ENCODE measurements at regions of chr1 and their contacts with region 1.

Region 1: GRCh38 chr1:165597883-165598675 is 33.0 kb upstream of the MGST3 start:
- DNase-seq: peak; percentile 90
- ATAC-seq: peak; percentile 99
- H3K4me3 ChIP-seq: peak overlapping the region; percentile 55 to 77 (median 70)
- H3K27ac ChIP-seq: peak overlapping the region; percentile 26
- H3K4me1 ChIP-seq: peaks cover 38% of the 10 kb centered on the region
- H3K27me3 ChIP-seq: no peaks in the 10 kb centered on the region
- CTCF ChIP-seq: no peak
- EP300 ChIP-seq: no peak
- POLR2A ChIP-seq: 0 out of 4 replicates have a peak, but pooled peaks of 1 of the 2 experiments have one; percentile 1
- RAD21 ChIP-seq: no peak

Region 2: GRCh38 chr1:165144757-165145397 is 453.2 kb before region 1 on chr1:
- CTCF ChIA-PET with region 1: no interaction called
- POLR2A ChIA-PET with region 1: no interaction called
- in situ Hi-C with region 1: loop called (anchors 25 kb)
- intact Hi-C with region 1: no loop called
- DNase-seq: peak; percentile 44
- ATAC-seq: peak; percentile 95
- H3K4me3 ChIP-seq: no peak overlapping the region
- H3K27ac ChIP-seq: no peak overlapping the region
- H3K4me1 ChIP-seq: peaks cover 9% of the 10 kb centered on the region
- H3K27me3 ChIP-seq: no peaks in the 10 kb centered on the region
- CTCF ChIP-seq: peak; percentile 85
- EP300 ChIP-seq: no peak
- POLR2A ChIP-seq: no peak
- RAD21 ChIP-seq: 0 out of 2 replicates have a peak, but pooled peaks have one; percentile 21

Region 3: GRCh38 chr1:165392634-165393571 is 205.2 kb before region 1 on chr1:
- CTCF ChIA-PET with region 1: interaction called, 34 read pairs
- POLR2A ChIA-PET with region 1: no interaction called
- in situ Hi-C with region 1: no loop called
- intact Hi-C with region 1: loop called (anchors 1 kb)
- DNase-seq: peak; percentile 35
- ATAC-seq: peak; percentile 94
- H3K4me3 ChIP-seq: no peak overlapping the region
- H3K27ac ChIP-seq: no peak overlapping the region
- H3K4me1 ChIP-seq: no peaks in the 10 kb centered on the region
- H3K27me3 ChIP-seq: no peaks in the 10 kb centered on the region
- CTCF ChIP-seq: peak; percentile 91
- EP300 ChIP-seq: no peak
- POLR2A ChIP-seq: no peak
- RAD21 ChIP-seq: peak; percentile 75

Region 4: GRCh38 chr1:165630629-165631341 is 32.7 kb after region 1 on chr1 and contains the start of gene MGST3:
- CTCF ChIA-PET with region 1: no interaction called
- POLR2A ChIA-PET with region 1: interaction called, 7 read pairs
- in situ Hi-C with region 1: no loop called
- intact Hi-C with region 1: loop called (anchors 2 kb)
- DNase-seq: peak; percentile 91
- ATAC-seq: peak; percentile 94
- H3K4me3 ChIP-seq: peak within 1 kb of the TSS; percentile 69 to 85 (median 82)
- H3K27ac ChIP-seq: peak within 1 kb of the TSS; percentile 87
- H3K4me1 ChIP-seq: peaks cover 36% of the 10 kb centered on the region
- H3K27me3 ChIP-seq: peaks cover 0 to 4% of the 10 kb centered on the region in 2 experiments; a peak in 1 of 5 replicates
- CTCF ChIP-seq: no peak
- EP300 ChIP-seq: no peak
- POLR2A ChIP-seq: peak; percentile 74 to 91
- RAD21 ChIP-seq: no peak
- total RNA-seq, gene MGST3: 34.3 and 59.7 TPM in 2 replicates

Region 5: DNA sequence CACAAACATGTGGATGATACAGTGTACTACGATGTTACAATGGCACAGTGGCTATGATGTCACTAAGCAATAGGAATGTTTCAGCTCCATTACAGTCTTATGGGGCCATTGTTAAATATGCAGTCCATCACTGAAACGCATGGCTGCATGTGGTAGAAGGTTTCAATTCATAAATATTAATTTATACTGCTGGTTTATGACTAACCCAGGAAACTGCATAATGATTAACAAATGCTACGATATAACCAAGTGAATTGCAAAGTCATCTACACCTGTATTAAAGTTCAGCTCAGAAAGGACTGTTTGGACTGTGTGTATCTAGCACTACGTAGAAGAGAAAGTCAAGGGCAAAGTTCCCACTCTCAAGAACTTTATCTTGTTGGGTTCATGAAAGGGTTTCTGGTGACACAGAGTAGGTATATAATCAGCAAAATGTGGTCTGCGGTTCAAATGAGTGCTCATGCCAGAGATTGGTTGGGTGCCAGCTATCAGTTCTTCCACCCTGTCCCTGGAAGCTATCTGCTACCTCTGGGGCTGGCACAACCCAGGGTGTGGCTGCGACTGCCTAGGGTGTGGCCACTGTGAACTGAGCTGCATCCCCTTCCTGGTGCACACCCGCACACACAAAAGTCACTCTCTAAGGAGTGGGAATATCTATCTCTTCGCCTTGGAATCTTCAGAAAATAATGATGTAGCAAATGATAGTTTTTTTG is 47.7 kb after region 1 on chr1:
- CTCF ChIA-PET with region 1: no interaction called
- POLR2A ChIA-PET with region 1: no interaction called
- in situ Hi-C with region 1: no loop called
- intact Hi-C with region 1: no loop called
- DNase-seq: peak; percentile 57
- ATAC-seq: peak; percentile 74
- H3K4me3 ChIP-seq: no peak overlapping the region
- H3K27ac ChIP-seq: peak overlapping the region; percentile 55
- H3K4me1 ChIP-seq: peaks cover 27% of the 10 kb centered on the region
- H3K27me3 ChIP-seq: no peaks in the 10 kb centered on the region
- CTCF ChIP-seq: no peak
- EP300 ChIP-seq: no peak
- POLR2A ChIP-seq: no peak
- RAD21 ChIP-seq: no peak

Region 6: GRCh38 chr1:165717918-165718515 is 119.9 kb after region 1 on chr1:
- CTCF ChIA-PET with region 1: no interaction called
- POLR2A ChIA-PET with region 1: no interaction called
- in situ Hi-C with region 1: no loop called
- intact Hi-C with region 1: loop called (anchors 1 kb)
- DNase-seq: peak; percentile 69
- ATAC-seq: peak; percentile 89
- H3K4me3 ChIP-seq: no peak overlapping the region
- H3K27ac ChIP-seq: no peak overlapping the region
- H3K4me1 ChIP-seq: peaks cover 25% of the 10 kb centered on the region
- H3K27me3 ChIP-seq: no peaks in the 10 kb centered on the region
- CTCF ChIP-seq: peak; percentile 87
- EP300 ChIP-seq: no peak
- POLR2A ChIP-seq: no peak
- RAD21 ChIP-seq: peak; percentile 75